ENCODE measurements at regions of chr6 and their contacts with region 1.

Region 1: GRCh38 chr6:111259089-111259831 is 172.0 kb downstream of the SLC16A10 start:
- DNase-seq: peak; percentile 97 to 98
- H3K4me3 ChIP-seq: peak overlapping the region; percentile 47 to 81 (median 68)
- H3K27ac ChIP-seq: peak overlapping the region; percentile 37
- H3K4me1 ChIP-seq: peaks cover 2 to 8% (median 5%) of the 10 kb centered on the region in 4 experiments; a peak in 6 of 7 replicates
- H3K27me3 ChIP-seq: no peaks in the 10 kb centered on the region
- CTCF ChIP-seq: peak; percentile 85 to 99 (median 93)
- EP300 ChIP-seq: no peak; a peak in 1 of 3 replicates
- POLR2A ChIP-seq: peak in 1 of 2 experiments; percentile 53; a peak in 1 of 3 replicates
- RAD21 ChIP-seq: peak; percentile 88

Region 2: GRCh38 chr6:111171577-111172400 is 87.5 kb before region 1 on chr6:
- CTCF ChIA-PET with region 1: no interaction called
- POLR2A ChIA-PET with region 1: no interaction called
- DNase-seq: no peak
- H3K4me3 ChIP-seq: no peak overlapping the region
- H3K27ac ChIP-seq: no peak overlapping the region
- H3K4me1 ChIP-seq: peaks cover 0 to 6% (median 0%) of the 10 kb centered on the region in 4 experiments; a peak in 1 of 7 replicates
- H3K27me3 ChIP-seq: no peaks in the 10 kb centered on the region
- CTCF ChIP-seq: no peak
- EP300 ChIP-seq: no peak
- POLR2A ChIP-seq: no peak
- RAD21 ChIP-seq: no peak

Region 3: DNA sequence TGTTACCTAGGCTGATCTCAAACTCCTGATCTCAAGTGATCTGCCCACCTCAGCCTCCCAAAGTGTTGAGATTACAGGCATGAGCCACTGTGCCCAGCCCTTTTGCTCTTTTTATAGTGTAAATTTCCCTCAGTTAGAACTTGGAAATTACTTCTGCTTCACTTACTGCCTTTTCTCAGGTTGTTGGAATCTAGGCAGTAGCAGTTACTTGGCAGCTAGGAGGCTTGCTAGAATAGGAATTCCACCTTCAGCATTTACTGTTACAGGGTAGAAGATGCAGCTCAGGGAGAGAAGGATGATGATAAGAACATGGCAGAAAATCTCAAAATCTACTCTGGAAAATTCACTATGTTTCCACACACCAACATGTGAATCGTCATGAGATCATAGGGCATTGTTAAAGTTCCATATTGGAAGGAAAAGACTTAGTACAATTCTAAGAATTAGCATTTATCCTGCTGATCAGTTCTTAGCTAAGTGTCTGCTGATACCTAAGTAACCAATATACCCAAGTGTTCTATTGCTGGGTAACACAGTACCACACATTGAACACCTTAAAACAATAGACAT is 10.2 kb after region 1 on chr6:
- CTCF ChIA-PET with region 1: interaction called, 16 read pairs
- POLR2A ChIA-PET with region 1: no interaction called
- DNase-seq: no peak
- H3K4me3 ChIP-seq: no peak overlapping the region
- H3K27ac ChIP-seq: no peak overlapping the region
- H3K4me1 ChIP-seq: no peaks in the 10 kb centered on the region
- H3K27me3 ChIP-seq: no peaks in the 10 kb centered on the region
- CTCF ChIP-seq: no peak
- EP300 ChIP-seq: no peak
- POLR2A ChIP-seq: no peak
- RAD21 ChIP-seq: no peak

Region 4: GRCh38 chr6:111283707-111284106 is 24.4 kb after region 1 on chr6:
- CTCF ChIA-PET with region 1: interaction called, 10 read pairs
- POLR2A ChIA-PET with region 1: no interaction called
- DNase-seq: no peak
- H3K4me3 ChIP-seq: no peak overlapping the region
- H3K27ac ChIP-seq: no peak overlapping the region
- H3K4me1 ChIP-seq: peaks cover 0 to 4% (median 0%) of the 10 kb centered on the region in 4 experiments; a peak in 1 of 7 replicates
- H3K27me3 ChIP-seq: no peaks in the 10 kb centered on the region
- CTCF ChIP-seq: no peak
- EP300 ChIP-seq: no peak
- POLR2A ChIP-seq: no peak
- RAD21 ChIP-seq: no peak

Region 5: DNA sequence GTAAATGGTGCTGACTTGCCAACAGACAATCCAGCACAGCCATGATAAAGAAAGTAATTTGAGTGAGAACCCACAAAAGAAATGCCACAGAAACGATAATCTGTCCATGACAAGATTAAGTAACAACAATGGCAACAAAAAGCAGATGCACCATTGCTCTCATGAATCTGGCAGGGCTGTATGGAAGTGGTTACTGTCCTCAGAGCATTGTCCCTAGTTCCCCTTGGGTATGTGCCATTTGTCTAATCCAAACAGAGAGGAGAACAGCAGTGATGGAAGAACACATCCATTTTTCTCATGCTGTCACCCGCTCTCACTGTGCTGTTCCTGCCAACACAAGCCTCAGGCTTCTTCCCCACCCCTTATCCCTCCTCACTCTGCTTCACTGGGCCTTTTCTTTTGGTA is 157.9 kb after region 1 on chr6:
- CTCF ChIA-PET with region 1: no interaction called
- POLR2A ChIA-PET with region 1: no interaction called
- DNase-seq: no peak
- H3K4me3 ChIP-seq: no peak overlapping the region
- H3K27ac ChIP-seq: no peak overlapping the region
- H3K4me1 ChIP-seq: peaks cover 0 to 3% (median 0%) of the 10 kb centered on the region in 4 experiments; a peak in 1 of 7 replicates
- H3K27me3 ChIP-seq: no peaks in the 10 kb centered on the region
- CTCF ChIP-seq: no peak
- EP300 ChIP-seq: no peak
- POLR2A ChIP-seq: no peak
- RAD21 ChIP-seq: no peak

Region 6: DNA sequence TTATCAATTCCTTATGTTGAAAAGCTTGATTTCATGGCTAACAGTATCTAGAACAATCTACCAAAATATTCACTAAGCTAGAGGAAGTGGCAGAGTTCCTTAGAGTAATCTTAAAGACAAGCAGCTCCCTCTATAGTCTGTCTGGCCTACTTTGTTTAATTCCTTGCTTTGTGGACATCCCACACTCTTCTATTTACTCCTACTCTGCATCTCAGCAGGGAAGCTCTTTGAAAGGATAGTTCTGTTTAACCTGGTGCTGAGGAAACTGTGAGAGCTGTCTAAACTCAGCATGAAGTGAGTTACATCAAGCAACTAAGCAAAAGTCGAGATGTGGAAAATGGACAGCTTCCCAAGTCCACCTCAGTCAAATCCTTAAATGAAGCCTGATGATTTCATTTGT is 219.5 kb after region 1 on chr6:
- CTCF ChIA-PET with region 1: interaction called, 11 read pairs
- POLR2A ChIA-PET with region 1: interaction called, 8 read pairs
- DNase-seq: no peak
- H3K4me3 ChIP-seq: no peak overlapping the region
- H3K27ac ChIP-seq: no peak overlapping the region
- H3K4me1 ChIP-seq: peaks cover 0 to 12% (median 6%) of the 10 kb centered on the region in 4 experiments; a peak in 4 of 7 replicates
- H3K27me3 ChIP-seq: peaks cover 32 to 74% (median 50%) of the 10 kb centered on the region in 4 experiments
- CTCF ChIP-seq: peak in 2 of 3 experiments; percentile 37 to 51; a peak in 2 of 4 replicates
- EP300 ChIP-seq: peak in 1 of 2 experiments; percentile 74; a peak in 1 of 3 replicates
- POLR2A ChIP-seq: no peak
- RAD21 ChIP-seq: peak; percentile 64 to 69

Region 7: GRCh38 chr6:111517965-111518364 is 258.7 kb after region 1 on chr6:
- CTCF ChIA-PET with region 1: no interaction called
- POLR2A ChIA-PET with region 1: no interaction called
- DNase-seq: no peak
- H3K4me3 ChIP-seq: no peak overlapping the region
- H3K27ac ChIP-seq: no peak overlapping the region
- H3K4me1 ChIP-seq: 0 out of 7 replicates have a peak, but pooled peaks cover 0 to 2% (median 0%) of the 10 kb centered on the region in 4 experiments
- H3K27me3 ChIP-seq: no peaks in the 10 kb centered on the region
- CTCF ChIP-seq: no peak
- EP300 ChIP-seq: no peak
- POLR2A ChIP-seq: no peak
- RAD21 ChIP-seq: no peak

Region 8: DNA sequence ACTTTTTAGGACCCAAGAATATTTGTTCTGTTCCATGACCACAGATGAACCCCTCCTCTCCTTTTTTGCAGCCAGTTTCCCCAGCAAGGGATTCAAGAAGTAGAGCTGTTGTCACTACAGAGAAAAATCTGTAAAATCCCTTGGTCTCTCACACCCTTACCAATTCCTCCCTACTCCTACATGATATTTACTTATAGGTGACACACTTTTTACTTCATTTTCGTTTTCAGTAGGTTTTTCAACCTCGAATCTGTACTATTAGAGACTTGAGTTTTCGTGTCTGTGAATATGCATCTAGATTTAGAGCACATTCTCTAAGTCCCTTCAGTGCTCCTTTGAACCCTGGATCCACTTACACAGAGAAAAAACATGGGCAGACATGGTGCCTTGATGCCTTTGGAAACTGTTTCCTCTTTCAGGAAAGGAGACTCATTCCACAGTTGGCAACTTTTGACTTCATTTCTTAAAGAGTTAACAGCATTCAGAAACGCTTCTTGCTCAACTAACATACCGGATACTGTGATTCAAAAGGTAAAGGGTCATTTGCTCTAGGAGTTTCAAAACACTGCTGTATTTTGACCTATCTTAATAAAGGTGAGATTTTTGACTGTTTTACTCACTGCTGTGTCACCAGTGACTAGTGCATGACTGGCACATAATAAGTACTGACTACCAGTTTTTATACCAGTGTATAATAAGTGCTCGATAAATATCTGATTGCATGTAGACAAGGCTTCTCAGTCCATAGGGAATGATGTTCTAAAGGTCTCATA is 944.5 kb after region 1 on chr6:
- CTCF ChIA-PET with region 1: no interaction called
- POLR2A ChIA-PET with region 1: no interaction called
- DNase-seq: no peak
- H3K4me3 ChIP-seq: no peak overlapping the region
- H3K27ac ChIP-seq: no peak overlapping the region
- H3K4me1 ChIP-seq: peaks cover 0 to 6% (median 2%) of the 10 kb centered on the region in 4 experiments; a peak in 3 of 7 replicates
- H3K27me3 ChIP-seq: no peaks in the 10 kb centered on the region
- CTCF ChIP-seq: no peak
- EP300 ChIP-seq: no peak
- POLR2A ChIP-seq: no peak
- RAD21 ChIP-seq: no peak

Measured in H1 (cell line).